ENCODE measurements at regions of chr1 and their contacts with region 1.

Region 1: GRCh38 chr1:230104395-230105244 is 37.6 kb downstream of the GALNT2 start:
- DNase-seq: peak; percentile 100
- ATAC-seq: peak; percentile 79
- H3K4me3 ChIP-seq: no peak overlapping the region
- H3K27ac ChIP-seq: peak overlapping the region; percentile 77
- H3K4me1 ChIP-seq: peaks cover 40% of the 10 kb centered on the region
- H3K27me3 ChIP-seq: no peaks in the 10 kb centered on the region
- CTCF ChIP-seq: no peak
- POLR2A ChIP-seq: peak; percentile 68
- RAD21 ChIP-seq: no peak; the same call in 1 of the 2 replicates

Region 2: GRCh38 chr1:229913489-229913888 is 191.1 kb before region 1 on chr1:
- CTCF ChIA-PET with region 1: no interaction called
- POLR2A ChIA-PET with region 1: no interaction called
- dilution Hi-C with region 1: no loop called
- in situ Hi-C with region 1: no loop called
- intact Hi-C with region 1: no loop called
- DNase-seq: no peak
- ATAC-seq: no peak
- H3K4me3 ChIP-seq: no peak overlapping the region
- H3K27ac ChIP-seq: no peak overlapping the region
- H3K4me1 ChIP-seq: no peaks in the 10 kb centered on the region
- H3K27me3 ChIP-seq: no peaks in the 10 kb centered on the region; the same call in 1 of the 2 replicates
- CTCF ChIP-seq: no peak
- POLR2A ChIP-seq: no peak
- RAD21 ChIP-seq: no peak

Region 3: GRCh38 chr1:230090194-230090711 is 14.4 kb before region 1 on chr1:
- CTCF ChIA-PET with region 1: interaction called, 5 read pairs
- POLR2A ChIA-PET with region 1: no interaction called
- dilution Hi-C with region 1: no loop called
- in situ Hi-C with region 1: no loop called
- intact Hi-C with region 1: loop called (anchors 2 kb)
- DNase-seq: peak; percentile 87
- ATAC-seq: peak; percentile 75
- H3K4me3 ChIP-seq: no peak overlapping the region
- H3K27ac ChIP-seq: peak overlapping the region; percentile 90
- H3K4me1 ChIP-seq: peaks cover 30% of the 10 kb centered on the region
- H3K27me3 ChIP-seq: no peaks in the 10 kb centered on the region
- CTCF ChIP-seq: no peak
- POLR2A ChIP-seq: no peak; the same call in 1 of the 2 replicates
- RAD21 ChIP-seq: no peak